ENCODE measurements at regions of chr7 and their contacts with region 1.

Region 1: GRCh38 chr7:143287935-143288826 is at the start of gene CASP2:
- DNase-seq: peak; percentile 97 to 98
- H3K4me3 ChIP-seq: peak within 1 kb of the TSS; percentile 20 to 85 (median 66)
- H3K27ac ChIP-seq: peak within 1 kb of the TSS; percentile 63 to 83 (median 82)
- H3K4me1 ChIP-seq: peaks cover 9 to 44% of the 10 kb centered on the region in 2 donors
- H3K27me3 ChIP-seq: no peaks in the 10 kb centered on the region
- CTCF ChIP-seq: peak in 3 of 6 experiments; percentile 32 to 44 (median 33)
- POLR2A ChIP-seq: peak in 1 of 2 donors; percentile 85
- total RNA-seq, gene CASP2: 13.0 to 21.7 (median 17.5) TPM

Region 2: DNA sequence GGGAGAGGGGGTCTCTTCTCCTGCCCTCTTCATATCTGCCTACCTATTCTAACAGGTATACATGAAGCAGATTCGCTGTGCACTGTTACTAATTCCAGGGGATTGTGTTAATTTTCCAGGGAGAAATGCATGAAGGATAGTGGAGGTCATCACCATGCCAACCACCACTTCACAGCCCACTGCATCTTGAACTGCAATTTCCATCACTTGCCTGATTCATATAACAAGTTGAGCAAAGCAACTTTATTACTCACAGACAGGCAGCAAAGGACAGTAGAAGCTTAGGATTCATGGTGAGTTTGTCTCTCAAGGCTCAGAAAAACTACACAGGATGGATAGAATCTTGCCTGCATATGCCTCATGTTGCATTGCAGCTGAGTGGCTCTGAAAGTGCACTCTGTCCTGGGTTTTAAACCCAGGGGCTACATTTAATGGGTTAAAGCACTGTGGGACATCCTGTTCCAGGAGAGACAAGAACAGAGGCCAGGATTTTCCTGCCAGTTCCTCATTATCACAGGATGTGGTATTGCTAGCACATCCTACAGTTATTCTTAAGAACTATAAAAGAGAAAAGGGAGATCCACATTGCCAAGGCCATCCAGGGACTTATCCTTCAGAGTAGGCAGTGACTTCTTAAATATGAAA is 675.8 kb before region 1 on chr7:
- intact Hi-C with region 1: no loop called
- DNase-seq: no peak
- H3K4me3 ChIP-seq: no peak overlapping the region
- H3K27ac ChIP-seq: no peak overlapping the region
- H3K4me1 ChIP-seq: no peaks in the 10 kb centered on the region
- H3K27me3 ChIP-seq: no peaks in the 10 kb centered on the region
- CTCF ChIP-seq: no peak
- POLR2A ChIP-seq: no peak

Region 3: DNA sequence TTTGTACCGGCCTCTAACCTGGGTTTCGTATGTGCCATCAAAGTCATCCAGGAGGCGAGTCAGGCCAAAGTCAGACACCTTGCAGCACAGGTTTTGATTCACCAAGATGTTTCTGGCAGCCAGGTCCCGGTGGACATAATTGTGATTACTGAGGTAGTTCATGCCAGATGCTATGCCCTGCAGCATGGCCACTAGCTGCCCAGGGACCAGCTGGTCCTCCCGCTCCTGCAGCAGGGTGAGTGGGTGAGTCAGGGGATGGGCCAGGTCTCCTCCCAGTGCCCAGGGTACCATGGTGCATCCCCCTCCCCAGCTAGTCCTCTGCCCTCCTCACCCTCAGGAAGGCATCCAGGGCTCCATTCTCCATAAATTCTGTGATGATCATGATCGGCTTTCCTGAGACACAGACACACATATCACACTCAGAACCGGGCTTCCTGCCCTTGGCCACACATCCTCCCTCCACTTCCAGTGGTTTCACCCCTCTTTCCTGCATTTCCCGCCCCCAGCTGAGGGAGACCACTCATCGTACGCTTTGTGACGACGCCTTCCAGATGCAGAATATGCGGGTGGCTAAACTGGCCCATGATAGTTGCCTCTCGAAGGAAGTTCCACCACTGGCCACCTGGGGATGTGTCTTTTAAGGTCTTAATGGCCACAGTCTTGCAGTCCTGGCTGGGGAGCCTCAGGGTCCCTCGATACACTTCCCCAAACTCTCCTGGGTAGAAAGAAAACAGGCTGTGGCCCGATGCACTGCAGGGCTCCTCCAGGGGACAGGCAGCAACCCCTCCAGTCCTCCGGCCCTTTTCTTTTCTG is 106.8 kb after region 1 on chr7:
- intact Hi-C with region 1: no loop called
- DNase-seq: no peak
- H3K4me3 ChIP-seq: no peak overlapping the region
- H3K27ac ChIP-seq: no peak overlapping the region
- H3K4me1 ChIP-seq: peaks cover 10 to 30% of the 10 kb centered on the region in 2 donors
- H3K27me3 ChIP-seq: no peaks in the 10 kb centered on the region
- CTCF ChIP-seq: no peak
- POLR2A ChIP-seq: no peak

Region 4: DNA sequence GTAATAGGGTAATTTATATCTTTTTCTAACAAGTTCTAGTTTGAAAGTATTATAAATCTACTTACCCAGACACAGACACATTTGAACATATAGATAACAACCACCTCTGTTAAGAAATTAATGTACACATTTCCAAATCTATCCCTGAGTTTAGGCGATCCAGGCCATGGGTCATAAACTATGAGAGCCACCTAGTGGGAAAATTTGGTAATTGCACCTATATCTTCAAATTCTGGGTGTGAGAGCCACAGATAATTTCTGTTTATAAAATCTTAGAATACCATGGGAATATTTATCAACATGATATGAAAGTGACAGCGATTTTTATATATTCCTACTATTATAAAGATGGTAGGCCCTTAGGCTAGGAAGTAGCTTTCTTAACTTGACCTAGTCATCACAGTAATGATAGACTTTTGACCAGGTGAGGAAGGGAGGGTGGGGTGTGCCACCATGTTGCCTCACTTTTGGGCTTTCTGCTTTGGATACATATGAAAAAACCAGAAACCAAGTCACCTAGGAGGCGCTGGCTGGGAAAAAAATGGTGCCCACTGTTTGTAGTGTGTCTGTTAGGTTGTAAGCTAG is 128.5 kb after region 1 on chr7:
- intact Hi-C with region 1: loop called (anchors 10 kb)
- DNase-seq: no peak
- H3K4me3 ChIP-seq: no peak overlapping the region
- H3K27ac ChIP-seq: no peak overlapping the region
- H3K4me1 ChIP-seq: no peaks in the 10 kb centered on the region
- H3K27me3 ChIP-seq: no peaks in the 10 kb centered on the region
- CTCF ChIP-seq: peak; percentile 54 to 74 (median 62)
- POLR2A ChIP-seq: no peak